H1 (cell line): ENCODE measurements at regions of chr11 and their contacts with region 1.

Region 1: GRCh38 chr11:100706179-100706578 is 19.1 kb downstream of the ARHGAP42 start:
- DNase-seq: no peak
- H3K4me3 ChIP-seq: no peak overlapping the region
- H3K27ac ChIP-seq: no peak overlapping the region
- H3K4me1 ChIP-seq: peaks cover 0 to 5% (median 4%) of the 10 kb centered on the region in 4 experiments; a peak in 3 of 7 replicates
- H3K27me3 ChIP-seq: no peaks in the 10 kb centered on the region
- CTCF ChIP-seq: no peak
- EP300 ChIP-seq: no peak
- POLR2A ChIP-seq: no peak
- RAD21 ChIP-seq: no peak

Region 2: DNA sequence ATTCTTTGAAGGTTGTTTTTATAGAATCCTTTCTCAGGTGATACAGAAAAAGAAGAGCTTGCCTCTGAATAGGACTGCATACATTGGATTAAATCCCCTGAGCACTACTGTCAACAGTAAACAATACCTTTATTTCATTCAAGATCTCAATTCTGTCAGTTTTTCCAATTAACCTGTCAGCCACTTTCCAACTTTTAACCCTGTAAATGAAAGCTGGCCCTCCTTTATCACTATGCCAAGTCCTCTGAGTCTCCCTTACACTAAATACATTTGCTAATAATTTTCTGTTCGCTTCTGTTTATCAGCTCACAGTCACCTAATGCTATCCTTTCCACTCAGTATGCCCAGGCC is 232.8 kb before region 1 on chr11:
- CTCF ChIA-PET with region 1: no interaction called
- POLR2A ChIA-PET with region 1: no interaction called
- DNase-seq: no peak
- H3K4me3 ChIP-seq: no peak overlapping the region
- H3K27ac ChIP-seq: no peak overlapping the region
- H3K4me1 ChIP-seq: no peaks in the 10 kb centered on the region
- H3K27me3 ChIP-seq: no peaks in the 10 kb centered on the region
- CTCF ChIP-seq: no peak
- EP300 ChIP-seq: no peak
- POLR2A ChIP-seq: no peak
- RAD21 ChIP-seq: no peak

Region 3: DNA sequence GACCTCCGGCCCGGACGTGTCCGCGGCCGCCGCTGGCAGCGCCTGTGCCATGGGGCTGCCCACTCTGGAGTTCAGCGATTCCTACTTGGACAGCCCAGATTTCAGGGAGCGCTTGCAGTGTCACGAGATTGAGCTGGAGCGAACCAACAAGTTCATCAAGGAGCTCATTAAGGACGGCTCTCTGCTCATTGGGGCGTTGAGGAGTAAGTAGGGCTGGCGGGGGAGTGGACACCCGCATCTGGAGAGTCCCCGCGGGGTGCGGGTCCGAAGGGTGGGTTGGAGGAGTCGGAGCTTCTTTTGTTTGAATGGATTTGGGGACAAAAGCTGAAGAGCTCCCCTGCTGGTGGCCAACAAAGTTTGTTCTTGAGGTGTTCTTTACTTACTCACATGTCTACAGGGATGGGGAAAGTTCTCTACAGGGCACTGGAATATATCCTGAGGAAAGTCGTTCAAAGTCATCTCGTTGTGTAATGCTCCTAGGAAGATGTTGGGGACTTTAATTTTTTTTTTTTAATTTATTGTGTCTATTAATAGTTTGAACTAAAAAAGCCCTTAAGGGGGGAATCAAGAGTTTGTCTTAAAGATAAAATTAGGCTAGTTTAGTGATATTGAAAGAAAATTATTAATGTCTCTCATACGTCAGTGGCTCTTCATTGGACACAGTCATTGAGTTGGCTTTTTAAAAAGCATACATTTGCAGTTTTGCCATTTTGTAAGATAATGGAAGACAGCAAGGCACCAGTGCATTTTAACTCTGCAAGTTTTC is 18.4 kb before region 1 on chr11:
- CTCF ChIA-PET with region 1: interaction called, 12 read pairs
- POLR2A ChIA-PET with region 1: interaction called, 4 read pairs
- DNase-seq: peak; percentile 53 to 78
- H3K4me3 ChIP-seq: peak overlapping the region; percentile 87 to 96 (median 92)
- H3K27ac ChIP-seq: peak overlapping the region; percentile 74; the same call in 1 of the 2 replicates
- H3K4me1 ChIP-seq: peaks cover 0 to 7% (median 3%) of the 10 kb centered on the region in 4 experiments; a peak in 4 of 7 replicates
- H3K27me3 ChIP-seq: no peaks in the 10 kb centered on the region
- CTCF ChIP-seq: peak; percentile 8 to 61 (median 43); a peak in 3 of 4 replicates
- EP300 ChIP-seq: no peak
- POLR2A ChIP-seq: no peak; a peak in 1 of 3 replicates
- RAD21 ChIP-seq: peak; percentile 32 to 44; a peak in 3 of 4 replicates

Region 4: DNA sequence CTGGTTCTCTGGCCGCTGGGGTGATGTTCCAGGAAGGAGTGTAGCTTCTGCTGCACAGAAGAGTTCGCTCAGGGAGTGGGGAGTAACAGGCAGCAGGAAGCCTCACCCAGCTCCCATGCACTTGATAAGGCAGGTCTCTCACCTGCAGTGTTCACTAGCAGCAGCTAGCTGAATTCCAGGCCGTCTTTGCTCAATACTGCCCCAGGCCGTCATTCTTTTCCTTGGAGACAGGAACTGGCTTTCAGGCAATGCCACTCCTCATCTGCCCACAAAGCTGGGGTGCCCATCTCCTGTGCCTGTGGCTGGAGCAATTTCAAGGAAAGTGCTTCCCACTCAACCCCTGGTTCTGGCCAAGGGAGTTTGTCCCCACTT is 47.0 kb after region 1 on chr11:
- CTCF ChIA-PET with region 1: no interaction called
- POLR2A ChIA-PET with region 1: no interaction called
- DNase-seq: peak; percentile 43 to 61
- H3K4me3 ChIP-seq: no peak overlapping the region
- H3K27ac ChIP-seq: 0 out of 2 replicates have a peak overlapping the region, but pooled peaks have one; percentile 14
- H3K4me1 ChIP-seq: peaks cover 8 to 21% (median 18%) of the 10 kb centered on the region in 4 experiments; a peak in 6 of 7 replicates
- H3K27me3 ChIP-seq: no peaks in the 10 kb centered on the region
- CTCF ChIP-seq: peak in 1 of 3 experiments; percentile 7; a peak in 1 of 4 replicates
- EP300 ChIP-seq: no peak
- POLR2A ChIP-seq: no peak
- RAD21 ChIP-seq: peak; percentile 4 to 18; a peak in 1 of 4 replicates